Activated CD4-positive, alpha-beta T cell treated with anti-CD3 and anti-CD28 coated beads, Interleukin-2, amount 10 ng/mL, durations not matched to agents 24 days and 14 days (primary cell): ENCODE measurements at regions of chr4 and their contacts with region 1.

Region 1: DNA sequence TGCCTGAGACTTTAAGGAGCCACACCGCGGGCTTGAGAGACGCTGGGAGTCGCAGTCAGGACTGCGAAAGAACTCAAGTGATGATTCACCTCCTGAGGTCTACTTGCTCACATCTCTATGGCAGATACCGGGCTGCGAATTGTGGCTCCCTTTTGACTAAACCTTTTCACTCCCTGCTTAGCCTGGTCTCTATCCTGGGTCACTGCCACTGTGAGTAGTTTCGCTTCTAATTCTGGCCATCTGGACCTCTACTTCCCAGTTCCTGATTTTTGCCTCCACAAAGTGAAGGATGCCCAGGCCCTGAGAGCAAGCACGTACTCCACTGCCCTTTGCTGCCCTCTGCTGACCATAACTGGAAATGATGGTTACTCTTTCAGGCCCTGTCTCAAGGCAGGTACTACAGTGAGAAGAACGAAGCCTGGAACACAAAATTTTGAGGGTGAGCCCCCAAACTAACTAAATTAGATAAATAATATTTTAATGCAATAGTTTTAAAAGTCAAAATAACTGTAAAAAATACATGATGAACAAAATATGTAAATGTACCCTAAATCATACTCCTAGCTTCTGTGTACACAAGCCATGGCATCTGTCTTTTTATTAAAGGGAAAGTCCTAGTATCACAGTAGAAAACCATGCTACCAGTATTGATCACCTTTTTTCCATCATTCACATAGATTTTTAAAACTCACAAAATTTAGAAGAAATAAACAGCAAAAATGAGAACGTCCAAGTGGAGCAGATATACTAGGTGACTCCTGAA is 16.7 kb downstream of the MAD2L1 start:
- DNase-seq: peak; percentile 93
- H3K4me3 Mint-ChIP-seq: peak overlapping the region; percentile 31
- H3K27ac Mint-ChIP-seq: peak overlapping the region; percentile 26
- H3K4me1 Mint-ChIP-seq: peaks cover 2% of the 10 kb centered on the region
- H3K27me3 Mint-ChIP-seq: no peaks in the 10 kb centered on the region

Region 2: DNA sequence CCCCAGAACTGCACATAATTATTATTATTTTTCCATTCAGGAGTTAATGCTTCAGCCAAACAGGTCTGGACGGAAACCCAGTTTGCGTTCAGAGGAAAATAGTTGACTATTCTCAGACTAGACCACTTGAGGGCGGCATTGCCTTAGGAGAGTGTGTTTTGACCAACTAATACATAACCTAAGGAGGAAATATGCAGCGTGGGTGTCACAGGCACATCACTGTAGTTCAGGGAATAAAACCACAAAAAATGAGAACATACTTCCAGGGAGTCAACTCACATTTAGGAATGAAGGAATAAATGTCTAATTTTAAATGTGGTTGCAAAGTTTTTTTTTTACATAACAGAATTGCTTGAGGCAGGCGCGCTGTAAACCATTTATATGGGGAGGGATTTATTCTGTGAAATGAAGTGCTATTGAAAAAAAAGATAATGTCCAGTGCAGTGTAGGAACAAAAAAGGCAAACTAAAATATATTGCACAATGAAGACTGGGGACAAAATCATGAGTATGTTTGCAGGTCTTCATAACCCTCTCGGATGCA is 1068.0 kb before region 1 on chr4:
- intact Hi-C with region 1: loop called (anchors 2 kb)
- DNase-seq: peak; percentile 84
- H3K4me3 Mint-ChIP-seq: no peak overlapping the region
- H3K27ac Mint-ChIP-seq: no peak overlapping the region
- H3K4me1 Mint-ChIP-seq: no peaks in the 10 kb centered on the region
- H3K27me3 Mint-ChIP-seq: peaks cover 14% of the 10 kb centered on the region

Region 3: DNA sequence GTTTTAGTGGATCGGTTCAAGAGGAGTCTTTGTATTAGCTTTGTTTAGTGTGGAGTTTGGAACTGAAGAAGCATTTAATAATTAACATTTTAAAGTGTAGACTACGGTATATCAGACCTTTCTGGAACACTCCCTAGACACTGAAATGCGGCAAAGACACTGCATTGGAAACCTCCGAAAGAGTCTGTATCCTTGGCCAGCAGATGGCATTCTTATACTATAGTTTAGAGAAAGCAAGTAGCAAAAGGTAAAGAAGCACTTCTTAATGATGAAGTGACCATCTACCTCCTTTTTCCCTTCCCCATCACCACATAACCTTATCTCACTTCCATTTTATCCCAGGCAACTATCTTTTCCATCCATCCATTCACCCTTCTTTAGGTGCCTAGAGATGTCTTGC is 735.6 kb before region 1 on chr4:
- intact Hi-C with region 1: loop called (anchors 1 kb)
- DNase-seq: peak; percentile 79
- H3K4me3 Mint-ChIP-seq: no peak overlapping the region
- H3K27ac Mint-ChIP-seq: no peak overlapping the region
- H3K4me1 Mint-ChIP-seq: no peaks in the 10 kb centered on the region
- H3K27me3 Mint-ChIP-seq: peaks cover 13% of the 10 kb centered on the region

Region 4: GRCh38 chr4:119559044-119559647 is 490.8 kb before region 1 on chr4:
- intact Hi-C with region 1: loop called (anchors 5 kb)
- DNase-seq: no peak
- H3K4me3 Mint-ChIP-seq: no peak overlapping the region
- H3K27ac Mint-ChIP-seq: no peak overlapping the region
- H3K4me1 Mint-ChIP-seq: no peaks in the 10 kb centered on the region
- H3K27me3 Mint-ChIP-seq: no peaks in the 10 kb centered on the region

Region 5: GRCh38 chr4:119746951-119747350 is 303.0 kb before region 1 on chr4:
- intact Hi-C with region 1: no loop called
- DNase-seq: no peak
- H3K4me3 Mint-ChIP-seq: no peak overlapping the region
- H3K27ac Mint-ChIP-seq: no peak overlapping the region
- H3K4me1 Mint-ChIP-seq: no peaks in the 10 kb centered on the region
- H3K27me3 Mint-ChIP-seq: peaks cover 4% of the 10 kb centered on the region